Tibial artery (tissue), 4 donors: ENCODE measurements at regions of chr21 and their contacts with region 1.

Region 1: GRCh38 chr21:45797338-45797737 is 153.8 kb downstream of the PCBP3 start:
- DNase-seq: no peak
- H3K4me3 ChIP-seq: no peak overlapping the region
- H3K27ac ChIP-seq: no peak overlapping the region
- H3K4me1 ChIP-seq: no peaks in the 10 kb centered on the region
- H3K27me3 ChIP-seq: peaks cover 0 to 22% of the 10 kb centered on the region in 2 donors
- CTCF ChIP-seq: no peak

Region 2: GRCh38 chr21:45763074-45763473 is 34.3 kb before region 1 on chr21:
- intact Hi-C with region 1: loop called (anchors 1 kb)
- DNase-seq: no peak
- H3K4me3 ChIP-seq: no peak overlapping the region
- H3K27ac ChIP-seq: no peak overlapping the region
- H3K4me1 ChIP-seq: no peaks in the 10 kb centered on the region
- H3K27me3 ChIP-seq: peaks cover 0 to 12% of the 10 kb centered on the region in 2 donors
- CTCF ChIP-seq: no peak

Region 3: DNA sequence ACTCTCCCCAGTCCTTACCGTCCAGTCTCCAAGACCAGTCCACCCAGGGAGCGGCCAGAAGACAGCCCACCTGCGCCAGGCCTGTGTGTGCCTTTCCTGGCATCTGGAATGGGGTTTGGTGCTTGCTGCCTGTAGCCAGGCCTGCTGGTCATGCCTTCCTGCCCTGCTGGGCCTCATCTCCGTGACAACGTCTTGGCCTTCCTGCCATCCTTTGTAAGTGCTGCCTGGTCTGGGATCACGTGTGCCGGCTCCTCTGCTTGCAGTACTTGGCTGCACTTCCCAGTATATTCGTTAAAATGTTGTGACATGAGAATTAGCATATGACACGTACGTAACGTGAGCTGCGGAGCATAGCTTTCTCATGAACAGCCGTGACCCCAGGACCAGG is 38.9 kb after region 1 on chr21:
- intact Hi-C with region 1: no loop called
- DNase-seq: no peak
- H3K4me3 ChIP-seq: no peak overlapping the region
- H3K27ac ChIP-seq: no peak overlapping the region
- H3K4me1 ChIP-seq: no peaks in the 10 kb centered on the region
- H3K27me3 ChIP-seq: no peaks in the 10 kb centered on the region
- CTCF ChIP-seq: no peak